A673 (cell line): ENCODE measurements at regions of chr10 and their contacts with region 1.

Region 1: GRCh38 chr10:96017191-96017687 is 26.1 kb upstream of the CCNJ start:
- DNase-seq: peak; percentile 58
- H3K4me3 ChIP-seq: no peak overlapping the region
- H3K27ac ChIP-seq: no peak overlapping the region
- H3K4me1 ChIP-seq: no peaks in the 10 kb centered on the region
- H3K27me3 ChIP-seq: no peaks in the 10 kb centered on the region
- CTCF ChIP-seq: peak; percentile 80

Region 2: GRCh38 chr10:95360122-95360714 is 657.0 kb before region 1 on chr10:
- CTCF ChIA-PET with region 1: no interaction called
- POLR2A ChIA-PET with region 1: no interaction called
- intact Hi-C with region 1: no loop called
- DNase-seq: peak; percentile 35
- H3K4me3 ChIP-seq: no peak overlapping the region
- H3K27ac ChIP-seq: no peak overlapping the region
- H3K4me1 ChIP-seq: no peaks in the 10 kb centered on the region
- H3K27me3 ChIP-seq: peaks cover 6% of the 10 kb centered on the region
- CTCF ChIP-seq: no peak

Region 3: DNA sequence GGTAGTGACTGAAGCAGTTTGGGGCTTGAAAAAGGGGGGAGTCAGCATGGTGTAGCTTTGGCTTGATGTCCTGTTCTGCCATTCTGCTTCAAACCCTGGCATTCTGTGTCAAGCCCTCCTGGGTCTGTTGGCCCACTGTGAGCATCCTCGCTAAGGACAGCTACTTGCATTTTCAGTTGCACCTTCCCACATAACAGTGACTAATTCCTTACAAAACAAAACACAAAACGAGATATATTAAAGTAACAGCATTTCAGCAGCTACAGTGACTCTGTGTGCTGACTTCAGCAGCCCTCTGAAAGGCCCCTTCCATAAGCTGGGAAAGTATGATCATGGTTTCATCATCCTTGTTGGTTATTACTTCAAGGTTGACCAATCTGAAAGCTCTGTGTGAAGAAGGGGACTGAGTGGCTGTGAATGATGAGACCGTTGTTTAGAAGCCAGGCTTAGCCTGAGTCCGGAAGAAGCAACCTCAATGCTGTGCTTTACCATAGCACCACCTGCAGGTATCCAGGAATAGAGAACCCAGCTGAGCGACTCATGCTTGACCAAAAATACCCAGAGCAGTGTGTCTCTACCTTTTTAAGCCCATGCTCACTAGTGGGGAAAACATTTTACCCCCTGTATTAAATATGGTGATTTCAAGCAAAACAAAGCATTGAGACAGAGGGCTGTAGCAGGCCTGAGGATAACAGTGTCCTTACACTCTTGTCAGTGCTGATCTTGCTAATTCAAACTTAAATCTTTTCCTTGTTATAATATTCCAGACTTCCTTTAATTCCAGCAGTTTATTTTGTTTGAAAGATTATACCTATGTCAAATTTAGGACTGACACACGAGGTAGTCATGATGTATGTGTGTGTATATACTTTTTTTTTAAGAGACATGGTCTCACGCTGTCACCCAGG is 152.1 kb before region 1 on chr10:
- CTCF ChIA-PET with region 1: no interaction called
- POLR2A ChIA-PET with region 1: no interaction called
- intact Hi-C with region 1: no loop called
- DNase-seq: peak; percentile 49
- H3K4me3 ChIP-seq: no peak overlapping the region
- H3K27ac ChIP-seq: no peak overlapping the region
- H3K4me1 ChIP-seq: no peaks in the 10 kb centered on the region
- H3K27me3 ChIP-seq: no peaks in the 10 kb centered on the region
- CTCF ChIP-seq: peak; percentile 62

Region 4: DNA sequence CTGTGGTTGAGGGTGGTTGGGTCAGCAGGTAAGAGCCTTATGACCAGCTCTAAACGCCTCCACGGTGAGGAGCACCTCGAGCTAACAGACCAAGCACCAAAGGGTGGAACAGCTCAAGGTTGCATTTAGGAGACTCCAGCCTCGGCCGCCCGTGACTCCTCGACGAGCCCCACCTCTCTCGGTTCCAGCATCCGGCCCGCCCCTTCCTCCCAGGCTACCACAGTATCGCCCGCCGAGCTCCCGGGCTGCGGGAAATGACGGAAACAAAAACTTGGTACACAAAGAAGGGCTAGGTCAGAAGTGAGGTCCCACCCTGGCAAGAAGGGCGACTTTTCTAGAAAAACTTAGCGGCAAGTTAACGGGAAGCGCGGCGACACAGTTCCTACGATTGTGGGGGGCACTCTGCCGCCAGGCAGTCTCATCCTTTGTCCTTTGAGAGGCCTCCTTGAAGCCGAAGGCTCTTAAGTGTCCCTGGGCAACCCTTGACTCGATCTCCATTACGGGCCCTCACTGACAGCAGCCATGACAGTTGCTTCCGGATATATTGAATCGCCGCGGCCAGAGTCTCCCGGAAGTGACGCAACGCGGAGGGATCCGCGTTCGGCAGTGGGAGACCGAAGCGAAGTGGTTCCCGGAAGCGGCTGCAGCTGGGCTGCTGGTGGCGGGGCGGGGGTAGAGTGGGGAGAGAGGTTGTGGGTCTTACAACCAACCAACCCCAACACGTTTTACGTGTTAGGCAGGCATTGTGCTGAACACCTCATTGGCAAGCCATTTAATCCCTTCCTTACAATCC is 72.6 kb after region 1 on chr10:
- CTCF ChIA-PET with region 1: no interaction called
- POLR2A ChIA-PET with region 1: no interaction called
- intact Hi-C with region 1: no loop called
- DNase-seq: peak; percentile 97
- H3K4me3 ChIP-seq: peak overlapping the region; percentile 80
- H3K27ac ChIP-seq: peak overlapping the region; percentile 93
- H3K4me1 ChIP-seq: no peaks in the 10 kb centered on the region
- H3K27me3 ChIP-seq: peaks cover 13% of the 10 kb centered on the region
- CTCF ChIP-seq: no peak

Region 5: DNA sequence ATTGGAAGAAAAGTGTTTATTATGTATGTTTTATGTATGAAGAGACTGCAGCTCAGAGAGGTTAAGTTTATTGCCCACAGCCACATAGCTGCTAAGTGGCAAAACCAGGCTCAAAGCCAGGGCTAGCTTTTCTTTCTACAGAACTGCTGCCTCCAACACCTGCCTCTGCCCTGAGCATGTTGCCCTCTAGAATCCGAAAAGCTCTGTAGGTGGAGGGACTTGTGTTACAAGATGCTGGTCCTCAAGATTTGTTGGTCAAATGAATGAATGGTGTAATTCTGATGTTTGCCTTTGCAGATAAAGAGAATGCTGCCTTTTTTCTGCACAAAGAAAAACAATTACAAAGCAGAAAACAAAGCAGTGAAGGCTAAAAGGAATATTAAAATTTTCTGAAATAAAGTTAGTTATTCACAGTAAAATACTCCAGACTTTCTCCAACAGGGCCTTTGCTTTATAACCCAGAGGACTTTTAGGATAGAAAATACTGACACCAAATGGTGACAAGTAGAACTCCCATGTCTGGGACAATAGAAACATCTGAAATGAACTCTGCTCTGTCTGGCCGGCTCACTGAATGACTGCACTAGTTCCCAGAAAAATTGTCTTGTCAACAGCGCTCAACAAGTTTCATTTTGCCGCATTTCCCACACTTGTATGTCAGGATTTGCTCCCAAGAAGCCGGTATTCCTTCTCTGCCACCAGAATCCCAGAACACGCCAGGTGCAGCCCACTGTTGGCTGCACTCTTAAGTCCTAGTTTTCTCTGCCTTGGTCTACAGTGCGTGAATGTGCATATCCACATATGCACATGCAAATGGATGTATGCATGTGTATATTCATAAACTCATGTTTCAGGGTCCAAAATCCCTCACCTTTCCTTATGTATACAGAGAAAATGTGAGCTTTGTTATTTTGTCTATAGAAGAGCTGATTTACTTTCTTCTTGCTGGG is 276.0 kb after region 1 on chr10:
- CTCF ChIA-PET with region 1: interaction called, 5 read pairs
- POLR2A ChIA-PET with region 1: no interaction called
- intact Hi-C with region 1: loop called (anchors 1 kb)
- DNase-seq: peak; percentile 48
- H3K4me3 ChIP-seq: no peak overlapping the region
- H3K27ac ChIP-seq: no peak overlapping the region
- H3K4me1 ChIP-seq: no peaks in the 10 kb centered on the region
- H3K27me3 ChIP-seq: peaks cover 46% of the 10 kb centered on the region
- CTCF ChIP-seq: peak; percentile 65

Region 6: GRCh38 chr10:96339957-96340904 is 323.0 kb after region 1 on chr10:
- CTCF ChIA-PET with region 1: interaction called, 6 read pairs
- POLR2A ChIA-PET with region 1: no interaction called
- intact Hi-C with region 1: loop called (anchors 1 kb)
- DNase-seq: peak; percentile 74
- H3K4me3 ChIP-seq: no peak overlapping the region
- H3K27ac ChIP-seq: no peak overlapping the region
- H3K4me1 ChIP-seq: no peaks in the 10 kb centered on the region
- H3K27me3 ChIP-seq: no peaks in the 10 kb centered on the region
- CTCF ChIP-seq: peak; percentile 89